Heart left ventricle (tissue), 16 donors: ENCODE measurements at regions of chr2 and their contacts with region 1.

Region 1: GRCh38 chr2:205776139-205776538 is 93.8 kb downstream of the NRP2 start:
- DNase-seq: peak in 4 of 5 donors; percentile 36 to 73 (median 54)
- ATAC-seq: peak in 3 of 4 donors; percentile 75 to 84 (median 82)
- H3K4me3 ChIP-seq: no peak overlapping the region
- H3K27ac ChIP-seq: peak overlapping the region in 1 of 12 donors; percentile 85
- H3K4me1 ChIP-seq: no peaks in the 10 kb centered on the region
- H3K27me3 ChIP-seq: peaks cover 0 to 6% (median 0%) of the 10 kb centered on the region in 9 donors
- CTCF ChIP-seq: peak; percentile 45 to 68 (median 58)
- POLR2A ChIP-seq: no peak

Region 2: GRCh38 chr2:205585449-205586383 is 190.4 kb before region 1 on chr2:
- intact Hi-C with region 1: no loop called
- DNase-seq: no peak
- ATAC-seq: no peak
- H3K4me3 ChIP-seq: no peak overlapping the region
- H3K27ac ChIP-seq: no peak overlapping the region
- H3K4me1 ChIP-seq: no peaks in the 10 kb centered on the region
- H3K27me3 ChIP-seq: no peaks in the 10 kb centered on the region
- CTCF ChIP-seq: no peak
- POLR2A ChIP-seq: no peak

Region 3: GRCh38 chr2:205700331-205701132 is 75.6 kb before region 1 on chr2:
- intact Hi-C with region 1: no loop called
- DNase-seq: peak in 1 of 5 donors; percentile 54
- ATAC-seq: peak in 3 of 4 donors; percentile 47 to 59 (median 49)
- H3K4me3 ChIP-seq: no peak overlapping the region
- H3K27ac ChIP-seq: peak overlapping the region in 6 of 12 donors; percentile 21 to 93 (median 38)
- H3K4me1 ChIP-seq: peaks cover 0 to 84% (median 33%) of the 10 kb centered on the region in 12 donors
- H3K27me3 ChIP-seq: no peaks in the 10 kb centered on the region
- CTCF ChIP-seq: no peak
- POLR2A ChIP-seq: no peak

Region 4: GRCh38 chr2:205885492-205886099 is 109.5 kb after region 1 on chr2:
- intact Hi-C with region 1: loop called in 7 of 10 experiments (anchors 2 to 5 kb)
- DNase-seq: peak; percentile 75 to 93 (median 86)
- ATAC-seq: peak; percentile 75 to 96 (median 88)
- H3K4me3 ChIP-seq: no peak overlapping the region
- H3K27ac ChIP-seq: peak overlapping the region in 1 of 12 donors; percentile 40
- H3K4me1 ChIP-seq: no peaks in the 10 kb centered on the region
- H3K27me3 ChIP-seq: no peaks in the 10 kb centered on the region
- CTCF ChIP-seq: peak; percentile 80 to 92 (median 85)
- POLR2A ChIP-seq: no peak